MCF 10A (cell line): ENCODE measurements at regions of chr1 and their contacts with region 1.

Region 1: DNA sequence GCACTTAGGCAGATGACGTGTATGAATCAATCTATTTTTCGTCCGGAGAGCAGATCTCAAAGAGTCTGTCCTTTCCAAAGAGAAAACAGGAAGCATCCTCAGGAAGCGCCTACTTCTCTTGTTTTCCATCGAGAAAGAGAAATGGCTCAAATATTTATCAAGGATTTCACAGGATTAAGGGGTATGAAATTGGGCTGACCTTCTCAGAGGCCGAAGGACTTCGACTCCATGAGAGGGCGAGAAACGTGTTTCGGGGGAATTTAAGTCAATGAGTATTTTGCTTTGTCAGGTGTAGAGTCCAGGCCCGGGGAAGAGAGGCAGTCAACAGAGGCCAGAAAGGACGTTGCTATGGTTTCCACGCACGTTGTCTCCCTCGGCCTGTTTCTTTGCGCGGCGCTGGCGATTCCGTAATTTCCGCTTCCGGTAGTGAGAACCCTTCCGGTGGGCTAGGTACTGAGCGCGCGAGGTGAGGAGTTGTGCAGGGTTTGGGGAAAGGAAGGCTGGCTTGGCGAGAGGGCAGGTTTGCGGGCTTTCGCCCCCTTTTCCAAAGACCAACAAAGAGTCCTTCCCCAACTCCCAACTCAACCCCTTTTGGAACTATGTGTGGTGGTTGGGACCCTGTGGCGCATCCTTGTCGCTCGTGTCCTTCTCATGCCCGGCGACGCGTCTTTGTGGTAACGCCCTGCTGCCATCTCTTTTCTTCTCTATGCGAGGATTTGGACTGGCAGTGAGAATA is at the start of gene MRPS21:
- DNase-seq: peak; percentile 94
- H3K4me3 Mint-ChIP-seq: peak within 1 kb of the TSS; percentile 93
- H3K27ac Mint-ChIP-seq: peak within 1 kb of the TSS; percentile 100
- H3K4me1 Mint-ChIP-seq: peaks cover 26% of the 10 kb centered on the region
- H3K27me3 Mint-ChIP-seq: no peaks in the 10 kb centered on the region
- CTCF ChIP-seq: no peak
- total RNA-seq, gene MRPS21: 133 and 152 TPM in 2 replicates

Region 2: GRCh38 chr1:150021191-150021694 is 272.4 kb before region 1 on chr1:
- CTCF ChIA-PET with region 1: no interaction called
- POLR2A ChIA-PET with region 1: no interaction called
- intact Hi-C with region 1: no loop called
- DNase-seq: no peak
- H3K4me3 Mint-ChIP-seq: no peak overlapping the region
- H3K27ac Mint-ChIP-seq: peak overlapping the region; percentile 65
- H3K4me1 Mint-ChIP-seq: peaks cover 10% of the 10 kb centered on the region
- H3K27me3 Mint-ChIP-seq: no peaks in the 10 kb centered on the region
- CTCF ChIP-seq: no peak

Region 3: DNA sequence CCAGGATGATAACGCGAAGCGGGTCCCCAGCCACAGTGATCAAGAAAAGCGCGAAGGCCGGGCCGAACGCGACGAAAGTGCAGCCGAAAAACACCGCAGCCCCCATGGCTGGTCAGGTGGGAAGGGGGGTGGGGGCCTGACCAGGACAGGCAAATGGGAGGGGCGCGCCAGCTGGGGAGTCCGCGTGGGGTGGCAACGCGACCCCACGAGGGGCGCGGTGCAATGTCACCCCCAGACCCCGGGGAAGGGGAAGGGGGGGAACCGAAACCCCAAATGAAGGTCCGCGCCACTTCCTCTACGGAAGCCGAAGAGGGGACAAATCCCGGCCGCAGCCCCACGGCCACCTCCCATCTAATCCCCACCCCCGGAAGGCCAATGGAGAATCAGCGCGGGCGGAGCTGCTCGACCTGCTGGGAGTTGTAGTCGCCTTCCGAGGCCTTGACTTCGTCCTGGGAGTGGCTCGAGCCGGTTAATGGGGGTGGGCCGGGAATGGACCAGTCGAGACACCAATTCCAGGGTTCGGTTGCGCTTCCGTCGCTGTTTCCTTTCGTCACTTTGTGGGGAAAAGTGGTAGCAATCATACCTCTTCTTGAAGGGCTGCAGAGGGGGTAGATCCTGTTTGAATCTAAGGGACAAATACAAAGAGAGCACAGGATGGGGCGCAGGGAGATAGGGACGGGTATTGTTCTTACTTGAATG is 24.7 kb before region 1 on chr1 and contains the start of gene APH1A:
- CTCF ChIA-PET with region 1: interaction called, 3 read pairs
- POLR2A ChIA-PET with region 1: interaction called, 10 read pairs
- intact Hi-C with region 1: no loop called
- DNase-seq: peak; percentile 99
- H3K4me3 Mint-ChIP-seq: peak within 1 kb of the TSS; percentile 81
- H3K27ac Mint-ChIP-seq: peak within 1 kb of the TSS; percentile 83
- H3K4me1 Mint-ChIP-seq: peaks cover 32% of the 10 kb centered on the region
- H3K27me3 Mint-ChIP-seq: no peaks in the 10 kb centered on the region
- CTCF ChIP-seq: no peak
- total RNA-seq, gene APH1A: 123 and 154 TPM in 2 replicates

Region 4: DNA sequence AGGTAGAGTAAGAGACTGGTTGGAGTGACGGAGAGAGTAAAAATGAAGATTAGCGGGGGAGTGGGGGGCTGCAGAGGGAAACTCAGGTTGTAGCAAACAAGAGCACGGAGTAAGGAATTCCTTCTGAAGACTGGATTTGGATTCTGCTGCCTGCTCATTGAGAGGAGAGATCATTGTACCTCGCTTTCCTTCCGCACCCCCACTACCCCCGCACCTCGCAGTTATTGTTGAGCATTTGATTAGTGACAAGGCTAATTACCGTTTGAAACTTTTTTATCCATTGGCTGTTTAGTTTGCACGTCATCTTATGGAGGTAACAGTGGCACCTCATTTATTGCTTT is 28.2 kb after region 1 on chr1:
- CTCF ChIA-PET with region 1: interaction called, 4 read pairs
- POLR2A ChIA-PET with region 1: interaction called, 15 read pairs
- intact Hi-C with region 1: no loop called
- DNase-seq: no peak
- H3K4me3 Mint-ChIP-seq: peak overlapping the region; percentile 98
- H3K27ac Mint-ChIP-seq: peak overlapping the region; percentile 95
- H3K4me1 Mint-ChIP-seq: peaks cover 10% of the 10 kb centered on the region
- H3K27me3 Mint-ChIP-seq: no peaks in the 10 kb centered on the region
- CTCF ChIP-seq: no peak